ENCODE measurements at regions of chr12 and their contacts with region 1.

Region 1: DNA sequence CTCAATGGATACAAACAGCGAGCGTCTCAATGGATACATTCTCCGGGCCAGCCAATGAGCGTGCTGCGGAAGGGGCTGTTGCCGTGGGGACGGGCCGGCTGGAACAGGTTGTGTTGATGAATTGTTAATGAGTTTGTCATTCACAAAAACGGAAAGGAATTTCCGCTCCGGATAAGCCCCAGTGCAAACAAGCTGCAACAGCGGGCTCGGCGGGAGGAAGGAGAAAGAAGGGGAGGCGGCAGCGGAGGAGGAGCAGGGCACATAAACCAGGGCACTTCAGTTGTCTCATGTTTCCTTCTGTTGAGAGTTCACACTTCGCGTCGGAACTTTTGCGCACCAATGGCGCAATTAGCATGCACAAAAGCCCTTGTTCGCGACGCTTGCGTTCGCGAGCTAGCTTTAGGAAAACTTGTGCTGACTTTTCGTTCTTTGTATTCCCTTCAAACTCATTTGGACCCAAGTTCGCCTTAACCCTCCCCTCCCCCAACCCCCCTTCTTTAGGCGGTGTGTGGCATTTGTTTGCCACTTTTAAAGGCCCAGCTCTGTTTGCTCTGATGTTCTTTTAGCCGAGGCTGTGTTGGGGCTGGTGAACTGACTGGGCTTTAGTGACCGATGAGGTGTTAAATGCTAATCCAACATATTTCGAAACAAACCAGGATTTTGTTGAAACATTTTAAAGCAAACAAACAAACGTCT is at the start of gene DUSP6:
- DNase-seq: peak; percentile 99
- ATAC-seq: peak; percentile 73
- H3K4me3 ChIP-seq: peak within 1 kb of the TSS; percentile 91
- H3K27ac ChIP-seq: peak within 1 kb of the TSS; percentile 90
- H3K4me1 ChIP-seq: peaks cover 8% of the 10 kb centered on the region; the same call in 1 of the 2 replicates
- H3K27me3 ChIP-seq: no peaks in the 10 kb centered on the region
- CTCF ChIP-seq: no peak
- POLR2A ChIP-seq: no peak
- RAD21 ChIP-seq: no peak
- total RNA-seq, gene DUSP6: 70.1 and 78.6 TPM in 2 replicates

Region 2: DNA sequence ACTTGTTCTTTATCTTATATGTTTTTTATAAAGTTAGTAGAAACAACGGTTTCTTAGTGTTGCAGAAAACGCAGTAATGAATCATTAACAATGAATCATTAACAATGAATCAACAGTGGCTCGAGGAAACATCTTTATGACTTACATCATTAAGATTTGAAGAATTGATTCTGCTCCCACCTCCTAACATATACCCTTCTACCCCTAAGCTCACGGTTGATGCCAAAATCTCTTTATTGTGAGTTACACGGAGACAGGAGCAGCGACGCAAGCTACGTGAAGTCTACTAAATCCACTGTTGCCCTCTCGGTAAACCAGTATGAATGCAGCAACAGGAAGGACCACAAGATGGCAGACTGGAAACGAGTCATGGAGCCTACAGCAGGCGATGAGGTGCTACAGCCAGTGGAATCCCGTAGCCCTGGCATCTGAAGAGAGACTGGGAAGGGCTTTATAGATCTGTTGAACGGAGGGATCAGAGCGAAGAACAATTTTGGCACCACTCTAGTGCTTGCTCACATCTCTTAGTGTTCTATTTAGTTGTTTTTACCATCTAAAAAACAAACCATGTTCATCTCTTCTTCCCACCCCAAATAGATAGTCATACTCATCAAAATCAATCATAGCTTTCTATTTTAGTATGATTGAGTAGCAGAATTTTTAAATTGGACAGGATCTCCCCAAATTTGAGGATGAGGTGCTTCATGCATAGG is 333.1 kb before region 1 on chr12:
- CTCF ChIA-PET with region 1: interaction called, 4 read pairs
- POLR2A ChIA-PET with region 1: no interaction called
- dilution Hi-C with region 1: no loop called
- in situ Hi-C with region 1: no loop called
- intact Hi-C with region 1: loop called (anchors 1 kb)
- DNase-seq: peak; percentile 88
- ATAC-seq: peak; percentile 97
- H3K4me3 ChIP-seq: peak overlapping the region; percentile 28
- H3K27ac ChIP-seq: no peak overlapping the region; the same call in 1 of the 2 replicates
- H3K4me1 ChIP-seq: no peaks in the 10 kb centered on the region
- H3K27me3 ChIP-seq: no peaks in the 10 kb centered on the region
- CTCF ChIP-seq: peak; percentile 96
- POLR2A ChIP-seq: no peak; the same call in 1 of the 2 replicates
- RAD21 ChIP-seq: peak; percentile 95

Region 3: GRCh38 chr12:89067421-89068187 is 285.0 kb before region 1 on chr12:
- CTCF ChIA-PET with region 1: no interaction called
- POLR2A ChIA-PET with region 1: no interaction called
- dilution Hi-C with region 1: no loop called
- in situ Hi-C with region 1: no loop called
- intact Hi-C with region 1: loop called (anchors 5 kb)
- DNase-seq: peak; percentile 94
- ATAC-seq: peak; percentile 88
- H3K4me3 ChIP-seq: no peak overlapping the region
- H3K27ac ChIP-seq: no peak overlapping the region
- H3K4me1 ChIP-seq: peaks cover 6% of the 10 kb centered on the region; the same call in 1 of the 2 replicates
- H3K27me3 ChIP-seq: no peaks in the 10 kb centered on the region
- CTCF ChIP-seq: no peak
- POLR2A ChIP-seq: no peak
- RAD21 ChIP-seq: peak; percentile 12; the same call in 1 of the 2 replicates

Region 4: GRCh38 chr12:89179983-89180382 is 172.7 kb before region 1 on chr12:
- CTCF ChIA-PET with region 1: no interaction called
- POLR2A ChIA-PET with region 1: no interaction called
- dilution Hi-C with region 1: no loop called
- in situ Hi-C with region 1: no loop called
- intact Hi-C with region 1: loop called (anchors 5 kb)
- DNase-seq: peak; percentile 73
- ATAC-seq: no peak
- H3K4me3 ChIP-seq: no peak overlapping the region
- H3K27ac ChIP-seq: no peak overlapping the region
- H3K4me1 ChIP-seq: peaks cover 2% of the 10 kb centered on the region; the same call in 1 of the 2 replicates
- H3K27me3 ChIP-seq: no peaks in the 10 kb centered on the region
- CTCF ChIP-seq: no peak
- POLR2A ChIP-seq: no peak
- RAD21 ChIP-seq: no peak

Region 5: GRCh38 chr12:89451841-89452251 is 99.2 kb after region 1 on chr12:
- CTCF ChIA-PET with region 1: no interaction called
- POLR2A ChIA-PET with region 1: interaction called, 54 read pairs
- dilution Hi-C with region 1: no loop called
- in situ Hi-C with region 1: loop called (anchors 5 kb)
- intact Hi-C with region 1: loop called (anchors 1 kb)
- DNase-seq: peak; percentile 87
- ATAC-seq: peak; percentile 50
- H3K4me3 ChIP-seq: no peak overlapping the region
- H3K27ac ChIP-seq: peak overlapping the region; percentile 82
- H3K4me1 ChIP-seq: peaks cover 22% of the 10 kb centered on the region
- H3K27me3 ChIP-seq: no peaks in the 10 kb centered on the region
- CTCF ChIP-seq: no peak
- POLR2A ChIP-seq: no peak
- RAD21 ChIP-seq: 0 out of 2 replicates have a peak, but pooled peaks have one; percentile 13

Region 6: DNA sequence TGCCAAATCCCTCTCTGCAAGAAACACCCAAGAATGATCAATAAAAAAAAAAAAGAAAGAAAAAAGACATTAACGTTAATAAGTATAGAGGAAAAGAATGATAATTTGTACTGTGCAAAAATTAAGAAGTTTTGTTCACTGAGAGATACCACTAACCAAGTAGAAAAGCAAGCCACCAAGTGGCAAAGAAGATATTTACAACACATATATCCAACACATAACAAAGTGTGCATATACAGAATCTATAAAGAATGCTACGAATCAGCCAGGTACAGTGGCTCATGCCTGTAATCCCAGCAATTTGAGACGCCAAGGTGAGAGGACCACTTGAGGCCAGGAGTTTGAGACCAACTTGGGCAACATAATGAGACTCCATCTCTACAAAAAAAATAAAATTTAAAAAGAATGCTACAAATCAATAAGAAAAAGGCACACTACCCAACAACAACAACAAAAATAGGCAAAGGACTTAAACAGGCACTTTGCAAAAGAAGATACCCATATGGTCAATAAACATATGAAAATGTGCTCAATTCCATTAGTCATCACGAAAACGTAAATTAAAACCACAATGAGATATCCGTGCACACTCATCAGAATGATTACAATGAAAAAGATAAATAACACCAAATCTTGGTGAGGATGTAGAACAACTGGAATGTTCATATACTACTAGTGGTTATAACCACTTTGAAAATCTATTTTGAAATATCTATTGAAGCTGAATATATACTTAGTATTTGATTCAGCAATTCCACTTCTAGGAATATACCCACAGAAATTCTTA is 152.1 kb after region 1 on chr12:
- CTCF ChIA-PET with region 1: no interaction called
- POLR2A ChIA-PET with region 1: no interaction called
- dilution Hi-C with region 1: no loop called
- in situ Hi-C with region 1: no loop called
- intact Hi-C with region 1: no loop called
- DNase-seq: peak; percentile 75
- ATAC-seq: peak; percentile 61
- H3K4me3 ChIP-seq: no peak overlapping the region
- H3K27ac ChIP-seq: no peak overlapping the region
- H3K4me1 ChIP-seq: peaks cover 3% of the 10 kb centered on the region; the same call in 1 of the 2 replicates
- H3K27me3 ChIP-seq: no peaks in the 10 kb centered on the region
- CTCF ChIP-seq: no peak
- POLR2A ChIP-seq: no peak
- RAD21 ChIP-seq: no peak

Region 7: GRCh38 chr12:89524541-89525285 is 172.1 kb after region 1 on chr12 and contains the start of gene GALNT4:
- CTCF ChIA-PET with region 1: no interaction called
- POLR2A ChIA-PET with region 1: interaction called, 6 read pairs
- dilution Hi-C with region 1: no loop called
- in situ Hi-C with region 1: loop called (anchors 10 kb)
- intact Hi-C with region 1: loop called (anchors 2 kb)
- DNase-seq: peak; percentile 85
- ATAC-seq: peak; percentile 81
- H3K4me3 ChIP-seq: peak within 1 kb of the TSS; percentile 88
- H3K27ac ChIP-seq: peak within 1 kb of the TSS; percentile 90
- H3K4me1 ChIP-seq: peaks cover 11% of the 10 kb centered on the region
- H3K27me3 ChIP-seq: no peaks in the 10 kb centered on the region
- CTCF ChIP-seq: peak; percentile 70
- POLR2A ChIP-seq: peak; percentile 19; the same call in 1 of the 2 replicates
- RAD21 ChIP-seq: peak; percentile 58
- total RNA-seq, gene GALNT4: 9.0 and 14.2 TPM in 2 replicates